Motor neuron (in vitro differentiated cells): ENCODE measurements at regions of chr4 and their contacts with region 1.

Region 1: DNA sequence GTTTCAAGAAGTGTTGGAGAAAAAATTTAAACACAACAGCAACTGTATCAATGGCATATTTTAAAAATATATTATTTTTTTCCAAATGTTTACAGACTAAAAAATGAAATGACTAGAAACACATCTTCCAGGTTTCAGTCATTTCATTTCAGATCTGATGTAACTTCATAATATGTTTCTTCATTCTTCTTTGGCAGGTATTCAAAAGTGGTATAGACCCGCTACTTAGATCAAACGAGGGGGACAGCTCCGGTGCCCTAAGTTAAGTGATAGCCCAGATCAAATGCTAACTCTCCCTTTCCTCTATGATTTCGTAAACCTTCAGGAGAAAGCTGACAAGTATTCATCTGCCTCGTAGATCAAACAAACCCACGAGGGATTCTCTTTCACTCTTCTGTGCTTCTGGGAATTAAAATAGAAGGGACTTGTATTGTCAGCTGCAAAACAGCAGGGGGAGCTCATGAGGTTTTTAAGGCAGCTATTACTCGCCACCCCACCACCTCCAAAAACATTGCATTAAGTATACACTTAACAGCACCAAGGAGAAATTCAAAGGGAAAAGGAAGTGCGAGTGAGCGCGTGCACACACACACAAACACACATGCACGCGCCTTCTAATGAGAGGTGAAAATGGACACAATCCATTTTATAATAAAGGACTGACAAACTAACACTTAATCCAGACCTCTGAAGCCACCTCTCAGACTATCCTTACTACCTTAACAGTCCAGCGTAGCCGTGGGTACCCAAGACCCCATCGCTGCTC is 21.4 kb downstream of the HELT start:
- ATAC-seq: peak; percentile 45 to 90 (median 59)
- H3K4me3 ChIP-seq: no peak overlapping the region
- H3K27ac ChIP-seq: no peak overlapping the region
- H3K4me1 ChIP-seq: peaks cover 0 to 2% of the 10 kb centered on the region in 2 donors

Region 2: DNA sequence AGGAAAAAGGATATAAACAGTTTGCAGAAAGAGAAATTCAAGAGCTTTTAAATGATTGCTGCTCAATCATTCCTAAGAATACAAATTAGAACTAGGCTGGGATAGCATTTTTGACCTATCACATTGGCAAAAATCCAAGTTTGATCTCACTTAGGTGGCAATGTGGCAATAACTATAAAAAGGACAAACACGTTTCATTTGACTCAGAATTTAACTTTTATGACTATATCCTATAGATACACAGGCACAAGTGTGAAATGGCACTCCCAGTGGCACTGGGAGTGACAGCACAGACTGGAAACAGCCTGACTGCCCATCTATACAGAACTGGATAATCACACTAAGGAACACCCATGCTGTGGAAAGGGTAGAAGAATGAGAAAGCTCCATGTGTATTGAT is 316.9 kb before region 1 on chr4:
- in situ Hi-C with region 1: no loop called
- ATAC-seq: no peak
- H3K4me3 ChIP-seq: no peak overlapping the region
- H3K27ac ChIP-seq: no peak overlapping the region
- H3K4me1 ChIP-seq: no peaks in the 10 kb centered on the region

Region 3: GRCh38 chr4:185142912-185143595 is 103.4 kb after region 1 on chr4 and contains the start of gene SLC25A4:
- in situ Hi-C with region 1: loop called in 2 of 9 experiments (anchors 25 kb)
- ATAC-seq: peak; percentile 90 to 96 (median 95)
- H3K4me3 ChIP-seq: peak within 1 kb of the TSS; percentile 61 to 96 (median 80)
- H3K27ac ChIP-seq: peak within 1 kb of the TSS; percentile 74 to 80
- H3K4me1 ChIP-seq: peaks cover 12 to 23% of the 10 kb centered on the region in 2 donors
- total RNA-seq, gene SLC25A4: 8.9 to 38.3 (median 27.3) TPM